Heart right ventricle (tissue), 16 donors: ENCODE measurements at regions of chr1 and their contacts with region 1.

Region 1: DNA sequence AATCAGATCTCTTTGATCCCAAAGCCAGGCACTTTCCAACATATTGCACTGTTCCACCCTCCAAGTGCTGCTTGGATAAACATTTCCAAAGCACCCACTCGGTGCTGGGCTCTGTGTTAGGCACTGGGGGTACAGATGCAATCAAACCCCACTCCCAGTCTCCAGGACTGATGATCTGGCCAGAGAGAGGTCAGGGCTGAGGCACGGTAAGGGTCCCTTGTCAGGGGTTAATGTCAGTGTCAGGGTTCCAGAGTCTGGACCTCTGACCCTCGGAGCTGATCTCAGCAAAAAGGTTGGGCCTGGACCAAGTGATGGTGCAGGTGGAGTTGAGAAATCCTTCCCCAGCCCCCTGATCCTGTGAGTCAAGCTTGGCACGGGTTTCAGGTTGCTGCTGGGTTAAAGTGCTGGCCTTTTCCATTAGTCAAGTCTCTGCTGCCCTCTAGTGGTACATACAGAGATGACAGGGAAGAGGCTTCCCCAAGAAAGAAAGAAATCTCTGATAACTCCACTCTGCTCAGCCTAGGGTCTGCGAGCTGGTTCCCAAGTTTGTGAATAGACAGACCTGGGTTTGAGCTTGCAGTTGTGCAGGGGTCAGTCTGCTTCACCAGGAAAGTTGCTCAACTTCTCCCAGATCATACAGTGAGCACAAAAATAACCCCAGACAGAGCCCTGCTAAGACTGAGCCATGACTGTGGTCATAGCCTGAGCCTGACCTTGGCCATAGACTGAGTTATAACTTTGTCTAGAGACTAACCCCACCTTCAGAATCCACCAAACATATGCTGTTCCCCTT is 74.6 kb downstream of the DMRTA2 start:
- DNase-seq: peak in 1 of 2 donors; percentile 53
- ATAC-seq: peak; percentile 47 to 79 (median 58)
- H3K4me3 ChIP-seq: no peak overlapping the region
- H3K27ac ChIP-seq: no peak overlapping the region
- H3K4me1 ChIP-seq: no peaks in the 10 kb centered on the region
- H3K27me3 ChIP-seq: peaks cover 0 to 51% (median 39%) of the 10 kb centered on the region in 7 donors
- CTCF ChIP-seq: peak; percentile 71 to 89 (median 84)

Region 2: DNA sequence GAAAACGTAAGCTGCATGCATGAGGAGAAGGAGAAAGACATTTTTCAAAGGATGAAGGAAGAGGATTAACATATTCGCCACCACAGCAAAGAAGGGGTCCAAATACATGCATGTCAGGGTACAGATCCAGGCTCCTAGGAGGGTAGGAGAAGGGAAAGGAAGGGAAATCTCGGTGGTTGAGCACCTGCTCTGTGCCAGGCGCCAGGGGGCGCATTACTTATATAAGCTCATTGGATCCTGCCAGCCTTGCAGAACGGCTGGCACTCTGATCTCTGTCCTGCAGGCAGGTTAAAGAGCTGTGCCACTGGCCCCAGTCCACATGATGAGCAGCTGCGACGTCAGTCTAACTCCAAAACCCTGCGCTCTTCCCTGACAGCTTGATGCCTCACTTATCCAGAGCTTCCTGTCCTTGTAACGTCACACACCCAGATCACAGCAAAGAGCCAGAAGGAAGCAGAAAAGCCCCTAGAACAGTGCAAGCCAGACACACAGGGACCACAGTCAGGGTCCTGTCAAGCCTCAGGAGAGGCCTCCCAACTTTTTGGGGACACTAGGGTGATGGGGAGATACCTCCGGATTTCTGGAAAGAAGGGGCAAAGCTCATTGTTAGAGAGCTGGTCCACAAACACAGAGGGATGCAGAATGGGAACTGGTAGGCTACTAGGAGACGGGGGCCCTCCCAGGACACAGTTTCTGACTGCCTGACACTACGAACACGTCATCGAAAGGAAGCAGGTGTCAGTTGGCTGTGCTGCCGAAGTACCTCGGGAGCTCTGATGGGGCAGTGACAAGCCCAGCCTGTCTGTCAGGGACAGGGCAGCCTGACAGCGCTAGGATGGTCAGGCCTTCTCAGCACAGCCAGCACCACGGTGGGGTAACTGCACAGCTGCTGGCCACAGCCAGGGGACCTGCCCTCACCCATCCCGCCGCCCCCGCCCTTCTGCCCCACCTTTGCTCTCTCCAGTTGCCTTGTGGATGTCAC is 1671.0 kb before region 1 on chr1:
- intact Hi-C with region 1: loop called in 3 of 10 experiments (anchors 5 to 10 kb)
- DNase-seq: peak; percentile 34 to 64
- ATAC-seq: peak in 6 of 8 donors; percentile 58 to 73 (median 68)
- H3K4me3 ChIP-seq: no peak overlapping the region
- H3K27ac ChIP-seq: no peak overlapping the region
- H3K4me1 ChIP-seq: peaks cover 0 to 3% (median 0%) of the 10 kb centered on the region in 9 donors
- H3K27me3 ChIP-seq: peaks cover 0 to 39% (median 25%) of the 10 kb centered on the region in 7 donors
- CTCF ChIP-seq: peak in 8 of 9 donors; percentile 41 to 75 (median 68)

Region 3: DNA sequence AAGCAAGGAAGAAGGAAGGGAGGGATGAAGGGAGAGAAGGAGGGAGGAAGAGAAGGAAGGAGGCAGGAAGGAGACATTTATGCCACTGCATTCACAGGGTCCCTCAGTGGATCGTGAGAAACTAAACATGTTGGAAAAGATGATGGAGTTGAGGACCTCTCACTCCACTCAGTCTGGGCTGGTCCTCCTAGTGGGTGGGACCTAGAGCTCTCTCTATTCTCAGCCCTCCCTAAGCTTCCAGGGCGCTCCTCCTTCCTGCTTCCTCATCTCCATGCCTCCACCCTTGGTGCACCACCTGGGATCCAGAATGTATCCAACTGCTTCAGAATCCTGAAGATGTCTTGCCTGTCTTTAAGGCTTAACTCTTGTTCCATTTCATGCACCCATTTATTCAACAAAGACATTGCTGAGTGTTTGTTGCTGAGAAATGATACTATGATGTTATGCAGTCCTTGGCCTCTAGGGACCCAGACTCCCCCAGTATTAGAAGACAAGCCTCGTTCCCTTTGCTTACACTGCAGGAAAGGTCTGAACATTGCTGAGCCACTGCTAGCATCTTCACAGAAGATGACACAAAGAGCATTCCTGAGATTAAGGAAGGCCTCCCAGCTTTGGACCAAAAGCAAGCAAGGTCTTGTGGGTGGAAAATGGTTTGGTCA is 1660.4 kb before region 1 on chr1:
- intact Hi-C with region 1: loop called in 1 of 10 experiments (anchors 10 kb)
- DNase-seq: no peak
- ATAC-seq: no peak
- H3K4me3 ChIP-seq: no peak overlapping the region
- H3K27ac ChIP-seq: no peak overlapping the region
- H3K4me1 ChIP-seq: no peaks in the 10 kb centered on the region
- H3K27me3 ChIP-seq: peaks cover 0 to 32% (median 7%) of the 10 kb centered on the region in 7 donors
- CTCF ChIP-seq: no peak